ENCODE measurements at regions of chr11 and their contacts with region 1.

Region 1: DNA sequence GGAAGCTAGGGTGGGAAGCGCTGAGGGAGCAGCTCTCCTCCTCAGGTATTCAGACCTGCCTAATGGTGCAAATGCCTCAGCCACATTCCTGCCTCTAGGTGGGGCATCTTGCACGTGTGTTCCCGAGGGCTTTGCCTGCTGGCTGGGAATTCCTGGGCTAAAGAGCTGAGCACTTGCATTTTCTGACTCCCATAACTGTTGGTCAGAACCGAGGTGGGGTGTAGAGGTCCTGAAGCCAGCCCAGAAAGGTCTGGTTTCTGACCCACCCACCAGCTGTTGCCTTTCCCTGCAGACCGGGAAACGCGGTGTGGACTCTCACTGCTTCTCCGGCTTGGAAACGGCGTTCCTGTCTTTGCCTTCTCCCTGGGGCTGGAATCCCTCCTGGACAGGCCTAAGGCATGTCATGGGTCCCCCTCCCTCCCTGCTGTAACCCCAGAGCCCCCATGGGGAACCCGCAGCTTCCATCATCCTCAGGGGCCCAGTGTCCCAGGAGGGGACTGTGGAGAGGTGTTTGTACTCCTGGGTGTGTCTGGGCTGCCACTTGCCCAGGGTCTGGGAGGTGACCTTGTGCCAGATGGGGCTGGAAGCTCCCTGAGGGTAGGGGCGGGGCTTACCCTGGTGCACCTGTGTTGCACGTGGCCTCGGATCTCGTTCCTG is 24.0 kb upstream of the SMIM38 start:
- DNase-seq: peak; percentile 92
- ATAC-seq: peak; percentile 94
- H3K4me3 Mint-ChIP-seq: no peak overlapping the region
- H3K27ac Mint-ChIP-seq: no peak overlapping the region
- H3K4me1 Mint-ChIP-seq: peaks cover 10% of the 10 kb centered on the region
- H3K27me3 Mint-ChIP-seq: peaks cover 8% of the 10 kb centered on the region; the same call in 1 of the 2 replicates
- CTCF ChIP-seq: peak; percentile 92

Region 2: GRCh38 chr11:68924073-68924945 is 207.5 kb before region 1 on chr11:
- CTCF ChIA-PET with region 1: no interaction called
- POLR2A ChIA-PET with region 1: no interaction called
- DNase-seq: no peak
- ATAC-seq: no peak
- H3K4me3 Mint-ChIP-seq: no peak overlapping the region
- H3K27ac Mint-ChIP-seq: no peak overlapping the region
- H3K4me1 Mint-ChIP-seq: no peaks in the 10 kb centered on the region
- H3K27me3 Mint-ChIP-seq: no peaks in the 10 kb centered on the region
- CTCF ChIP-seq: no peak

Region 3: DNA sequence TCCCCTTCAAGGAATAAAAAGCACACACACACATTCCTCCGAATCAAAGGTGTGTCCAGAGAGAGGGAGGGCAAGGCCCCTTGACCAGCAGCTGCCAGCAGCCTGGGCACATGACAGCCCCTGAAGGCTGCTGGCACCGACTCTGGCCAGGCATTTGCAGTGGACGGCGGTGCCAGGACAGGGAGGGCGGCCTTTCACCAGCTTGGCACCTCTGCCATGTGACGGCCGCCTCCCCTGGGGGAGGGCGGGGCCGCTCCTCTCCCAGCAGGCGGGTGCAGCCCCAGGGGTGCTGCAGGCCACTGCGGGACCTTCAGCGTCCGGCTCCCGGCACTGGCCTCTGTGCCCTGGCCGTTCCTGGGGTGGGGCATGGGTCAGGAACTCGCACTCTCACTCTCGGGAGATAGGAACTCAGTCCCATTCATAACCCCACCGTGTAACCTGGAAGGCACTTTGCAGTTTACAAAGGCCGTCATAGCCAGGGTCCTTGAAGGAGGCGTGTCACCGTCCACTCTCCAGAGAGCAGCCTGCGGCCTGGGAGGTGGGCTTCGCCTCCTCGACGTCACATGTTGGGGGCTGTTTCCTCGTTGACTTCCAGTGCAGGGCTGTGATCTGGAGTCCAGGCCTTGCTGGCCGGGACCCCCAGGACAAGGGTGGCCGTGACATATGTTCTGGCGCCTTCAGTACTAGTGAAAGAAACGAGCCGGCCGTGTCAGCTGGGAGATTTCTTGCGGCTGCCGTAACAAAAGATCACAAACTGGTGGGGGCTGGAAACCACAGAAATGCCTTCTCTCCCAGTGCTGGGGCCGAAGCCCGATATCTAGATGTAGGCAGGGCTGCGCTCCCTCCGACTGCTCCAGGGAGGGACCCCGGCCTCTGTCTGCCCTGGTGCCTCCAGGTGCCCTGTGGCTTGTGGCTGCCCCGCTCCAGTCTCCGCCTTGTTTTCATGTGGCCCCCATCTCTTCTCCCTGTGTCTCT is 15.9 kb before region 1 on chr11:
- CTCF ChIA-PET with region 1: interaction called, 71 read pairs
- POLR2A ChIA-PET with region 1: no interaction called
- DNase-seq: no peak
- ATAC-seq: no peak
- H3K4me3 Mint-ChIP-seq: no peak overlapping the region
- H3K27ac Mint-ChIP-seq: no peak overlapping the region
- H3K4me1 Mint-ChIP-seq: no peaks in the 10 kb centered on the region
- H3K27me3 Mint-ChIP-seq: no peaks in the 10 kb centered on the region; the same call in 1 of the 2 replicates
- CTCF ChIP-seq: no peak

Region 4: GRCh38 chr11:69172674-69173073 is 40.9 kb after region 1 on chr11:
- CTCF ChIA-PET with region 1: interaction called, 11 read pairs
- POLR2A ChIA-PET with region 1: no interaction called
- DNase-seq: no peak
- ATAC-seq: peak; percentile 73
- H3K4me3 Mint-ChIP-seq: no peak overlapping the region
- H3K27ac Mint-ChIP-seq: no peak overlapping the region
- H3K4me1 Mint-ChIP-seq: no peaks in the 10 kb centered on the region
- H3K27me3 Mint-ChIP-seq: no peaks in the 10 kb centered on the region
- CTCF ChIP-seq: no peak

Region 5: DNA sequence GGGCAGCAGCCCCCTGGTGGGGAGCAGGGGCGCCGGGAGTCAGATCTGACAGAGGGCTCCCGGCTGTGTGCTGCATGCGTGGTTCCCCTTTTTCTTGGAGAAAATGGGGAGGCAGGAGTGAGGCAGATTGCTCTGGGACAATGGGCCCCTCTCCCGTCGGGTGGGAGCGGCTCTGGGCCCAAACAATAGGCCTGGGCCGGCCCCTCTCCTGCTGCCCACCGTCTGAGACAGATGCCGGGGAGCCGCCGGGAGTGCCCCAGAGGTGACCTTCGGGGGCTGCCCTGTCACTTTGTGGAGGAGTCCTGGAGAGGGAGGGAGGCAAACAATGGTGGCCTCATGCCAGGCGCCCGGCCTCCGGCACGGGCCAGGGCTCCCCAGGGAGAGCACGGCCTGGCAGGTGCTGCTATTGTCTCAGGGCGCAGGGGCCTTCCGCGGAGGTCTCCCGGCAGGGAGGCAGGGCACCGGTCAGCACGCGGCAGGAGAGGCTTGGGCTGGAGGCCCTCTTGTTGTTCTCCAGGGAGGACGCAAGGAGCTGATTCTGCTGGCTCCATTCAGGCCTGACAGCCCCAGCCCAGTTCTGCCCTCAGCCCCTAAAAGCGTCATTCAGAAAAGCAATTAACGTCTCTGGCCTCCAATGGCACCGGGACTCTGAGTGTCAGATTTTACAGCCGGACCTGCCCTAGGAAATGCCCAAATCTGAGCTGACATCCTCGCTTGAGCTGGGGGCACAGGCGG is 68.7 kb after region 1 on chr11:
- CTCF ChIA-PET with region 1: interaction called, 15 read pairs
- POLR2A ChIA-PET with region 1: no interaction called
- DNase-seq: peak; percentile 13
- ATAC-seq: peak; percentile 60
- H3K4me3 Mint-ChIP-seq: no peak overlapping the region
- H3K27ac Mint-ChIP-seq: no peak overlapping the region
- H3K4me1 Mint-ChIP-seq: peaks cover 4% of the 10 kb centered on the region
- H3K27me3 Mint-ChIP-seq: no peaks in the 10 kb centered on the region; the same call in 1 of the 2 replicates
- CTCF ChIP-seq: no peak

Region 6: DNA sequence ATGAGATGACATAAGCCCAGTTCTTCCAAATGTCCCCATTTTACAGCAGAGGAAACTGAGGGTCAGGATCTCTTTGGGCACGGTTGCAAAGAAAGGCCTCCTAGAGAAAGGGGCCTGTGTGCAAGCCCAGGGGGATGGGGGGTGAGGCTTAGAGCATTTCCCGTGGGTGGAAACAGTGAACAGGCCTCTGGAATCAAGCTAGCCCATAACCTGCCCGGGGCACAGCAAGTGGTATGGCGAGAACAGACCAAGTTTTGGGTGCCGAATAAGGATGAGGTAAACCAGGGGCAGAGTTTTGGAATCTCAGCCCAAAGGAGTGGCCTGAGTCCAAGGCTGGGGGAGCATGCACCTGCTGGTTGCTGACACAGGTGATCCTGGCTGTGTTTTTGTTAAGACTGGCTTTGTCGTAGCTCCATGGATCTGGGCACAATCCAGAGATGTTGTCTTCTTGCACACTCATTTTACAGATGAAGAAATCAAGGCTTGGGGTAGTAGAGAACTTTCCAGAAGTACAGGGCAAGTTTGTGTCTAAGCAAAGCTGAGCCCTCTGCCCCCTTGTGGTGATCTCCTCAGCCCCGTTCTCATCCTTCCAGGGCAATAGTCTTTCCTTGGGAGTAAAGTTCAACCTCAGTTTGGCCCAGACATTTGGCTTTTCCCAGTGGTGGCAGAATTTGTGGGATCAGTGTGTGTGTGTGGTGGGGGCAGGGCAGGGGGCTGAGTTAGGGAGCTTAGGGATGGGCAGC is 108.7 kb after region 1 on chr11:
- CTCF ChIA-PET with region 1: interaction called, 26 read pairs
- POLR2A ChIA-PET with region 1: no interaction called
- DNase-seq: no peak
- ATAC-seq: peak; percentile 62
- H3K4me3 Mint-ChIP-seq: no peak overlapping the region
- H3K27ac Mint-ChIP-seq: no peak overlapping the region
- H3K4me1 Mint-ChIP-seq: peaks cover 9% of the 10 kb centered on the region; the same call in 1 of the 2 replicates
- H3K27me3 Mint-ChIP-seq: peaks cover 1% of the 10 kb centered on the region; the same call in 1 of the 2 replicates
- CTCF ChIP-seq: 0 out of 2 replicates have a peak, but pooled peaks have one; percentile 12

Region 7: DNA sequence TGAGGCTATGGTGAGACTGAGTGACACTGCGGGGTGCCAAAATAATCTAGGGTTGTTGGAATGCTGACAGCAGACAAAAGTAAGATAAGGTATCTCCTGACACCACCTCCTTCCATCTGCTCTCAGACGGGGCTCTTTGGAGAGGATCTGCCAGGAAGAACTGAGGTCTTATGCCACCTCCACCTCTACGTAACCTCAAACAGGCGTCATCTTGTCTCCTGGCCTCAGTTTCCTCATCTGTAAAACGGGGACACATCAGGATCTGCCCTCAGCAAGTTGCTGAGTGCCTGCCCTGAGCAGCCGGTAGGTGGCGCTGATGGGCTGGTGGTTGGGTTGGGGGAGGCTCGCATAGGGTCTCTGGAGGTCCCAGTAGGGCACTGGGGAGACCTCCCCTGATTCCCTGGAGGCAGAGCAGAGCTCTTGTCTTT is 160.5 kb after region 1 on chr11:
- CTCF ChIA-PET with region 1: interaction called, 27 read pairs
- POLR2A ChIA-PET with region 1: no interaction called
- DNase-seq: peak; percentile 80
- ATAC-seq: peak; percentile 43
- H3K4me3 Mint-ChIP-seq: no peak overlapping the region
- H3K27ac Mint-ChIP-seq: no peak overlapping the region
- H3K4me1 Mint-ChIP-seq: peaks cover 15% of the 10 kb centered on the region
- H3K27me3 Mint-ChIP-seq: no peaks in the 10 kb centered on the region
- CTCF ChIP-seq: peak; percentile 92

Region 8: DNA sequence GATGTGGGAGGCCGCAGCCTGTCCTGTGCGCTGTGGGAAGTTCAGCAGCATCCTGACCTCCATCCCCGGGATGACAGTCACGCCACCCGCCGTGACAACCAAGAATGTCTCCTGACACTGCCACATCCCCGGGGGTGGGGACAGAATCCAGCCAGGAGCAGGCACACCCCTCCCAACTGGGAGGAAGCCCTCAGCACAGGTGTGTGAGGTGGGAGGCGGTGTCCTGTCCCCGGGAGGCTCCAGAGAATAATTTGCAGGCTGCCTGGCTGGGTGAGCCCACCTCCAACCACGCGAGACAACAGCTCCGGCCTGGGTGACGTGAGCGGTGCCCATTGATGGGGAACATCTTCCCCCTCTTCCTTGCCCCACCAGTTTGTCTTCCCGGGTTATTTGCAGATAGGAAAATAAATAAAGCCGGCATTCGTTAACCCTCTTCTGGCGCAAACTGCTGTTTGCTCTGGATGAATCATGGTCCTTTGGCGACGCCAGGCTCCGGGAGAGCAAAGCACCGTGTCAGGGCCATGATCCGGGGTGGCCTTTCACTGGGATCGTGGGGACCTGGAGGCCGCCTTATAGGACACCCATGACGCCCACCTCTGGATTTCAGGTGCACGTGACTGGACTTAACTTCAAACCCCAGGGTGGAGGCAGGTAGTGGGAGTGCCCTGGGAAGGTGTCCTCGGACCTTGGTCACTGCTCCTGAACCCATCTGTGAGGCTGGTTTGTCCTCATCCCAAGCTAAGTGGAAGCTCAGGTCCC is 523.0 kb after region 1 on chr11:
- CTCF ChIA-PET with region 1: interaction called, 18 read pairs
- POLR2A ChIA-PET with region 1: no interaction called
- DNase-seq: no peak
- ATAC-seq: no peak; the same call in 1 of the 2 replicates
- H3K4me3 Mint-ChIP-seq: no peak overlapping the region
- H3K27ac Mint-ChIP-seq: 0 out of 2 replicates have a peak overlapping the region, but pooled peaks have one; percentile 45
- H3K4me1 Mint-ChIP-seq: peaks cover 28% of the 10 kb centered on the region
- H3K27me3 Mint-ChIP-seq: no peaks in the 10 kb centered on the region
- CTCF ChIP-seq: no peak